AG04449 (cell line): ENCODE measurements at regions of chr3 and their contacts with region 1.

Region 1: DNA sequence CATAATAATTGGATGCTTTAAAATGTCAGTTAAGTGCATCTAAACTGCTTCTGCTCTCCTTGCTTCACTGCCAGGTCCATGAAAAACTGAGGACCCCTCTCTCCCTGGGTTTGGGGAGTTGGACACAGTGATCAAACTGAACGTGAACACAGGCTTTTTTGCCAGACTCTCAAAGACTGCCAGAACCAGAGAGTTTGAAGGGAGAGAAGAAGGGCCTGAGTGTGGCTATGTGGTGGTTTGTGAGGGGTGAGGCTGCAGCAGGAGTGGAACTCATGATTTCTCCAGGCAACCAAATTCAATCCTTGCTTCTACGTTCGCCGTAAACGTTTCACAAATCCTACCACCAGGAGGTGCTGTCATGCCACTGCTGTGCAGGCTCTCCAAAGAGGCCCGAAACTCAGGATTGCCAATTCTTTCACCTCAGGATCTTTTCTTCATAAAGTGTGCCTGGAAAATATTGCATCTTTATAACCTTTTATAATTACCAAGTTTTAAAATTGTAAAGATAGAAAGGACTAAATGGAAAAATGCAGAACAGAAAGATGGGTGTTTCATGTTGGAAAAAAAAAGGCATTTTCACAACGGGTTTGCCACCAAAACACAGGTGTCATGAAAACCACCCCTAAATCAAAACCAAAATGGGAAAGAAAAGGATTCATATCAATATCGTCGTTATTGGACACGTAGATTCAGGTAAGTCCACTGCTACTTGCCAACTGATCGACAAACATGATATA is 19.7 kb downstream of the TM4SF4 start:
- DNase-seq: no peak
- H3K4me3 ChIP-seq: no peak overlapping the region
- CTCF ChIP-seq: peak; percentile 83

Region 2: GRCh38 chr3:149473357-149474249 is 20.6 kb before region 1 on chr3:
- CTCF ChIA-PET with region 1: interaction called, 47 read pairs
- POLR2A ChIA-PET with region 1: no interaction called
- DNase-seq: peak; percentile 55
- H3K4me3 ChIP-seq: no peak overlapping the region
- CTCF ChIP-seq: no peak

Region 3: GRCh38 chr3:149512209-149512782 is 18.1 kb after region 1 on chr3:
- CTCF ChIA-PET with region 1: interaction called, 22 read pairs
- POLR2A ChIA-PET with region 1: no interaction called
- DNase-seq: no peak
- H3K4me3 ChIP-seq: no peak overlapping the region
- CTCF ChIP-seq: peak; percentile 75